Endothelial cell of umbilical vein (primary cell): ENCODE measurements at regions of chr14 and their contacts with region 1.

Region 1: GRCh38 chr14:37150414-37150813 is 22.0 kb downstream of the SLC25A21 start:
- DNase-seq: peak; percentile 58
- H3K4me3 ChIP-seq: no peak overlapping the region
- H3K27ac ChIP-seq: no peak overlapping the region
- H3K4me1 ChIP-seq: no peaks in the 10 kb centered on the region
- H3K27me3 ChIP-seq: peaks cover 0 to 2% of the 10 kb centered on the region in 2 experiments
- CTCF ChIP-seq: peak; percentile 55 to 59
- POLR2A ChIP-seq: no peak

Region 2: GRCh38 chr14:36553656-36554260 is 596.7 kb before region 1 on chr14:
- CTCF ChIA-PET with region 1: interaction called, 149 read pairs
- POLR2A ChIA-PET with region 1: no interaction called
- dilution Hi-C with region 1: no loop called
- intact Hi-C with region 1: loop called (anchors 1 kb)
- DNase-seq: peak; percentile 49
- H3K4me3 ChIP-seq: no peak overlapping the region
- H3K27ac ChIP-seq: no peak overlapping the region
- H3K4me1 ChIP-seq: no peaks in the 10 kb centered on the region
- H3K27me3 ChIP-seq: peaks cover 3 to 6% of the 10 kb centered on the region in 2 experiments
- CTCF ChIP-seq: peak; percentile 56 to 61
- POLR2A ChIP-seq: no peak

Region 3: DNA sequence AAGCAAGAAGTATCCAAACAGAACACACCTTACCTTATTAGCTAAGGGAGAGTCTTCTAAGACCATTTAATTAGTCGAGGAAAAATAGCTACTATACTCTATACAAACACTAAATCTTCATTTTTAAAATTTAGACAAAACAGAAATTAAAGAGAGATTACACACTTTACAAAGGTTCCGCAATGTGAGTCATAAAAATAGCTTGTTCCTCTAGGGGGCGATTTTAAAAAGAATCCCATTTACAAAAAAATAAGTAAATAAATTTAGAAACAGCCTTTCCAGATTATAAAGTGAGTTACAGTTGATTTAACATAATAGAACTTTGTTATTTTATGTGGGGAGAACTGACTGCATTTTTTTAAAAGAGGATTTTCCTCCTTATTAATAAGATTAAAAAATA is 287.1 kb before region 1 on chr14:
- CTCF ChIA-PET with region 1: interaction called, 13 read pairs
- POLR2A ChIA-PET with region 1: no interaction called
- dilution Hi-C with region 1: no loop called
- intact Hi-C with region 1: no loop called
- DNase-seq: no peak
- H3K4me3 ChIP-seq: no peak overlapping the region
- H3K27ac ChIP-seq: no peak overlapping the region
- H3K4me1 ChIP-seq: no peaks in the 10 kb centered on the region
- H3K27me3 ChIP-seq: peaks cover 0 to 2% of the 10 kb centered on the region in 2 experiments
- CTCF ChIP-seq: no peak
- POLR2A ChIP-seq: no peak

Region 4: DNA sequence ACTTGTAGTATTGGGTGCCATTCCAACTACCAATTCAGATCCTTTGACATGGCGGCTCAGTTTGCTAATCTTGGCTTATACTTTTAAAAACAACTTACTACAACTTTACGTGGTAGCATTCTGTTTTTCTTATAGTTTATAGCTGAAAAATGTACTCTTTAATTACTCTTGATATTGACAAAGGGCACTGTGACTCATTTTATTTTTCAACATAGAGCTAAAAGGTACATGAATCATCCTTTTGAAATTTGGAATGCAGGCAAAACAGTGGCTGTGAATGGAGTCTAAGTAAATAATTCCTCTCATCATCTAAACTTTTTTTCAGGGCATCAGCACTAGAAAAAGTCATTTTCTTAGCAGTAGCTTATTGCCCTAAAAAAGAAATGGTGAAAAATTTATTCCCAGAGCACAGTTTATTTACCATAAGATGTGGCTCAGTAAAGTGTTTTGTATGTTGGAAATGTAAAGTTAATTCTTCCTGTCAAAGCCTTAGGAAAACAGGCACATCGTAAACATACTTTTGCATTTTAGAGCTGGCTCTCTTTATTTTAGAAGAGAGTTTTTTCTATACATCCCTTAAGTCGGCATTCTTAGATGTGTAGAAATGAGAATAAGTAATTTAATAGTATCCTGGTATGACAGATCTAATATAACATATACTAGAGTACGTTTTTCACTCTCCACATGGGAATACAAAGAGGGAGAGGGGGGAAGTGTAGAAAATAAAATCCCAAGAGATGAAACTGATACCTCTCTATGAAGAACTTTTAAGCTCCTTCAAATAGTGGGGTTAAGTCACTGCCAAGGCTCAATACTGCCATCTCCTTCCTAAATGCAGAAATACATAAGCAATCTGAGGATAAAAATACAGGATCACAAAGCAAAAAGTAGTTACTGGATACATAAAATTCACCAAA is 33.2 kb before region 1 on chr14:
- CTCF ChIA-PET with region 1: interaction called, 37 read pairs
- POLR2A ChIA-PET with region 1: no interaction called
- dilution Hi-C with region 1: no loop called
- intact Hi-C with region 1: no loop called
- DNase-seq: peak; percentile 79
- H3K4me3 ChIP-seq: no peak overlapping the region
- H3K27ac ChIP-seq: peak overlapping the region; percentile 76
- H3K4me1 ChIP-seq: peaks cover 20% of the 10 kb centered on the region
- H3K27me3 ChIP-seq: no peaks in the 10 kb centered on the region
- CTCF ChIP-seq: peak; percentile 19 to 43
- POLR2A ChIP-seq: no peak

Region 5: GRCh38 chr14:37165794-37166193 is 15.4 kb after region 1 on chr14:
- CTCF ChIA-PET with region 1: interaction called, 20 read pairs
- POLR2A ChIA-PET with region 1: no interaction called
- dilution Hi-C with region 1: no loop called
- intact Hi-C with region 1: no loop called
- DNase-seq: no peak
- H3K4me3 ChIP-seq: no peak overlapping the region
- H3K27ac ChIP-seq: no peak overlapping the region
- H3K4me1 ChIP-seq: no peaks in the 10 kb centered on the region
- H3K27me3 ChIP-seq: peaks cover 0 to 3% of the 10 kb centered on the region in 2 experiments
- CTCF ChIP-seq: no peak
- POLR2A ChIP-seq: no peak

Region 6: DNA sequence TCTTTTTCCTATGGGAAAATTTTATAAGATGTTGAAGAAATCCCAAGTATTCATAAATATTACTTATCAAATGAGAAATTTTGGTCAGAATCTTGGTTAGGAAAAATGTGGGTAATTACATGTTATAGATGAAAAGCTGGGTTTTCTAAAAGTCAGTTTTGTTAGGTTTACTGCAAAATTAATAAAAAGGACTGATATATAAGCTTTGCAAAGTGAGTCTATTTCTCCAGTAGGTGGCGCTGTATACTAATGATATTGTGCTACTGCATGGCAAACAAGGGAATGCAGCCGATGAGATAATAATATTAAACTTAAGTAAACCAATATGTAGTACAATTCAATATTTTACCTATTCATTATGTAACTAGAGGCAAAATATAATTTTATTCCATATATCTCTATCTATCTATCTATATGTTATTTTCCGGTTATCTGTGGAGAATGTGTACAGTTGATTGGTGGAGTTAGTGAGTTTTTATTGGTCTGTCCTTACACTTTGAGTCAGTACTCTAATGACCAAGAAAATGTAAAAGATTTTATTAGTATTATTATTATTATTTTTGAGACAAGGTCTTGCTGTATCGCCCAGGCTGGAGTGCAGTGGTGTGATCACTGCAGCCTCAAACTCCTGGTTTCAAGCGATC is 80.3 kb after region 1 on chr14:
- CTCF ChIA-PET with region 1: interaction called, 79 read pairs
- POLR2A ChIA-PET with region 1: no interaction called
- dilution Hi-C with region 1: no loop called
- intact Hi-C with region 1: loop called (anchors 1 kb)
- DNase-seq: peak; percentile 66
- H3K4me3 ChIP-seq: no peak overlapping the region
- H3K27ac ChIP-seq: no peak overlapping the region
- H3K4me1 ChIP-seq: no peaks in the 10 kb centered on the region
- H3K27me3 ChIP-seq: no peaks in the 10 kb centered on the region
- CTCF ChIP-seq: peak; percentile 40 to 54
- POLR2A ChIP-seq: no peak